ENCODE measurements at regions of chr11 and their contacts with region 1.

Region 1: DNA sequence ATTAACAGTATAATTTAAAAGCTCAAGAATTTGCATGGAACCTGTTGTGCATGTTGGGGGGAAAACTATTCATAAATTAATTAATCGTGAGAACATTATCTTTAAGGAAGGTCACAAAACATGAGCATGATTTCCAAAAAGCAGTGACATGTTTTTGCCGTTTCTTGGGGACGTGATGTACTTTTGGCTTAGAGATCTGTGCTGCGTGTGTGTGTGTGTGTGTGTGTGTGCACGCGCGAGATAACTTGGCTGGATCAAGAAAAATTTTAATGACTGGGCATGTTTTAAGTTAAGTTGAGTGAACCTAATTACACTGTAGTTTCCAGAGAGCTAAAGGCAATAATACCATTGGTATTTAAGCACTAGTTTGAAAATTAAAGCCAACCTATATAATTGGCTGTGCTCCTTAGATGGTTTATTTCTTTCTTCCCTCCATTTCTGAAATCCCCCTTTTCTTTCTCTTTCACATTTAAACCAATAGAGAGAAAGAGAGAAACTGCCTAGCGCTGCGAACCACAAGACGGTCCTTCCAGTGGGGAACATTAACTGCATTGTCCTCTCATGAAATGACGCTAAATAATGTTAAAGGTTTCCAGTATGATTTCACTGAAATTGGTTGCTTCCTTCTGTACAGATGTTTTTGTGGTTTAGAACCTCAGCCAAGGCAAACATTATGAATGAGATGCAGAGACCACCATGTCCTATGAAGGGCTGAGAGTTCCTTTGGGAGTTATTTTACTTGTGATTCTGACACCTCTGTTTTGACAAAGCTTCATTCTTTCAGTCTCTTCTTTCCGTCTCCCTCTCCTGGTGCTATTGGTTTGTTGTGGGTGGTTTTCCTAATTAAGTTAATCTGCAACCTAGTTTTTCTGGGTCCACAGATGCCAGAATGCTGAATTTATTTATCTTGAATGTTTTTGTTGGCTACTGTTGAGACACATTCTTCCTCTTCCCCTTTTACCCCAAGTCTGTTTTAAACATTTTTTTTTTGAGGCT is 51.7 kb downstream of the ZBTB16 start:
- DNase-seq: peak; percentile 71 to 89 (median 82)
- H3K4me3 ChIP-seq: peak overlapping the region in 6 of 7 experiments; percentile 9 to 74 (median 44)
- H3K27ac ChIP-seq: peak overlapping the region; percentile 43 to 72
- H3K4me1 ChIP-seq: peaks cover 25 to 52% (median 43%) of the 10 kb centered on the region in 4 experiments
- H3K27me3 ChIP-seq: no peaks in the 10 kb centered on the region

Region 2: DNA sequence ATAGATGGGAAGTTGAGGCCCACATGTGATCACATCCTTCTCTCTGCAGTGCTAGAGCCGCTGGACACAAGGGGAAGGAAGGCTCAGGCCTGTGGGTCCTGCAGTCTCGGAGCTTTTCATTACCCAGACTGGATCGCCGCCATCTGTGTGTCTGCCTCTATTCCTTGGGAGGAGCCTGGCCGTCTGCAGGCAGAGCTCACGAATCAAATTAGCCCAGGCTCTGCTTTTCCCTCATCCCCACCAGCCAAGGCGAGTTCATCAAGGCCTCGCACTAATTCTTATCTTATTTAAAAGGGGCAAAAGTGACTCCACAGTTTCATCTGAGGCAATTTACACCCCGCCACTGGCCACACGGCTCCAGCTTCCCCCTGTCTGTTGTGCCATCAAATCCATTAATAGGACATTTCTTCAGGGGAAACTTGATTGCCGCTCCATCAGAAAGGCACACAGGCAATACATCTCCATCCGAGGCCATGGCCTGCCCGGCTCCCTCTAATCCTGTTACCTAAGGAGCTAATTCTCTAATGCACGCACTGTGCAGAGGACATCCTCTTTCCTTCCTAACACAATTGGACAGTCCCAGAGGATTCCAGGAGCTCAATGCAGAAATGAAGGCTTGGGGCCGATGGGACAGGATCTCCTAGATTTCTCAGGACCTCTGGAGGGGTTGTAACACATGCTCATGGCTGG is 139.6 kb before region 1 on chr11:
- CTCF ChIA-PET with region 1: no interaction called
- POLR2A ChIA-PET with region 1: no interaction called
- DNase-seq: no peak
- H3K4me3 ChIP-seq: no peak overlapping the region
- H3K27ac ChIP-seq: no peak overlapping the region
- H3K4me1 ChIP-seq: peaks cover 0 to 2% (median 0%) of the 10 kb centered on the region in 4 experiments
- H3K27me3 ChIP-seq: peaks cover 0 to 8% (median 3%) of the 10 kb centered on the region in 5 experiments

Region 3: GRCh38 chr11:114053406-114053805 is 57.8 kb before region 1 on chr11:
- CTCF ChIA-PET with region 1: no interaction called
- POLR2A ChIA-PET with region 1: no interaction called
- DNase-seq: no peak
- H3K4me3 ChIP-seq: no peak overlapping the region
- H3K27ac ChIP-seq: no peak overlapping the region
- H3K4me1 ChIP-seq: peaks cover 0 to 16% (median 11%) of the 10 kb centered on the region in 4 experiments
- H3K27me3 ChIP-seq: peaks cover 0 to 8% (median 2%) of the 10 kb centered on the region in 5 experiments

Region 4: GRCh38 chr11:114091516-114092397 is 19.5 kb before region 1 on chr11:
- CTCF ChIA-PET with region 1: interaction called, 11 read pairs
- POLR2A ChIA-PET with region 1: interaction called, 5 read pairs
- DNase-seq: no peak
- H3K4me3 ChIP-seq: peak overlapping the region in 1 of 7 experiments; percentile 6
- H3K27ac ChIP-seq: peak overlapping the region; percentile 27 to 55
- H3K4me1 ChIP-seq: peaks cover 4 to 71% (median 54%) of the 10 kb centered on the region in 4 experiments
- H3K27me3 ChIP-seq: no peaks in the 10 kb centered on the region

Region 5: DNA sequence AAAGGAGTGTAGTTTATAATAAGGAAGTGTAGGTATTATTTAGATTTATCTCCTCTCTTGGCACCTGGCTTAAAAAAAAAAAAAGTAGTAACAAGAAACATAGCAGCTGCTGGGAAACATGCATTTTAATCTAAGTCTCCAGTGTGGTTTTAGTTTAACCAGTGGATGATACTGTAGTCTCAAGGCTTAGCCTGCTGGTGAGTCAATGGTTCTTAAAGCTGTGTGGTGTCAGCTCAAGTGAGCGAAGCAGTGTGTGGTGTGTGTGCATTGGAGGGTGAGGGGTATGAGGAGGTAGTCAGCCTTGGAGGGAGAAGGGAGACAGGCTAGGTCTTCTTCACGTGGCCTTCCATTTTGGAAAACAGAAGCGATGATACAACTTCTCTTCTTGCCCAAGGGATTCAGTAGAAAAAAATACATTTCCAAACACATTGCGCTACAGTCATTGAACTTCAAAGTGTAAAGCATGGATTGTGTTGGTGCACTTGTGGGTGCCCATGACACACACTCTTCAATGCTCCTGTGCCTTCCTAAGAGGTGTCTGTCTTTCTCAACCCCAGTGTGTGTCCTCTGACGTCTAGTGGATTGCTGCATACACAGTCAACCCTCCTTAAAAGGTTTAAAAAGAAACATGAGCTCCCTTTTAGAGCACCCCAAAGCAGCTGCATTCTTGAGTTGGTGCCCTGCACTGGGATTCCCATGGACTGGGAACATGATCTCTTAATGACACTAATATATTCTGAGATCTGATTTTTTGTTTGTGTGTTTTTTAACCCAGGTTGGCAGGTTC is 11.7 kb before region 1 on chr11:
- CTCF ChIA-PET with region 1: interaction called, 19 read pairs
- POLR2A ChIA-PET with region 1: interaction called, 11 read pairs
- DNase-seq: peak in 2 of 3 donors; percentile 71 to 85
- H3K4me3 ChIP-seq: no peak overlapping the region
- H3K27ac ChIP-seq: no peak overlapping the region
- H3K4me1 ChIP-seq: peaks cover 19 to 65% (median 40%) of the 10 kb centered on the region in 4 experiments
- H3K27me3 ChIP-seq: no peaks in the 10 kb centered on the region

Region 6: GRCh38 chr11:114135737-114136151 is 24.5 kb after region 1 on chr11:
- CTCF ChIA-PET with region 1: interaction called, 12 read pairs
- POLR2A ChIA-PET with region 1: interaction called, 3 read pairs
- DNase-seq: peak; percentile 84 to 95 (median 92)
- H3K4me3 ChIP-seq: peak overlapping the region in 4 of 7 experiments; percentile 9 to 42 (median 27)
- H3K27ac ChIP-seq: peak overlapping the region; percentile 81 to 91
- H3K4me1 ChIP-seq: peaks cover 28 to 86% (median 56%) of the 10 kb centered on the region in 4 experiments
- H3K27me3 ChIP-seq: no peaks in the 10 kb centered on the region

Region 7: DNA sequence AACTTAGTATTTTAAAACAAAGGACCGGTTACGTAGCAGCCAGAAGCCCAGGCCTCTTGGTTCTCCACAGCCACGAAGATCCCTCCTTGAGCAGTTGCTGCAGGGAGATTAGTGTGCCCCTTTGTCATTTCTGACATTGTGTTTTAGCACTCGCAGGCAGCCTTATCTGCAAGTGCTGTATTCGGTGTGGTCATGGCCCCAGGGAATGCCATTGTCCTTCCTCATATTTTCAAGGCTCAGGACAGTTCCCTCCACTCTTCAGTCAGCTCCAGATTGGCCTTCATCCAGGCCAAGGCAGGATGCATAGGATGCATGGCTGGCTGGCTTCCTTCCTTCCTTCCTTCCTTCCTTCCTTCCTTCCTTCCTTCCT is 36.7 kb after region 1 on chr11:
- CTCF ChIA-PET with region 1: interaction called, 11 read pairs
- POLR2A ChIA-PET with region 1: no interaction called
- DNase-seq: peak; percentile 56 to 94 (median 82)
- H3K4me3 ChIP-seq: no peak overlapping the region
- H3K27ac ChIP-seq: peak overlapping the region in 1 of 2 experiments; percentile 2
- H3K4me1 ChIP-seq: peaks cover 0 to 17% (median 8%) of the 10 kb centered on the region in 4 experiments
- H3K27me3 ChIP-seq: no peaks in the 10 kb centered on the region

Region 8: GRCh38 chr11:114228435-114229411 is 117.5 kb after region 1 on chr11:
- CTCF ChIA-PET with region 1: no interaction called
- POLR2A ChIA-PET with region 1: no interaction called
- DNase-seq: no peak
- H3K4me3 ChIP-seq: no peak overlapping the region
- H3K27ac ChIP-seq: no peak overlapping the region
- H3K4me1 ChIP-seq: peaks cover 0 to 11% (median 4%) of the 10 kb centered on the region in 4 experiments
- H3K27me3 ChIP-seq: no peaks in the 10 kb centered on the region

Region 9: GRCh38 chr11:114285599-114285998 is 174.3 kb after region 1 on chr11:
- CTCF ChIA-PET with region 1: no interaction called
- POLR2A ChIA-PET with region 1: no interaction called
- DNase-seq: no peak
- H3K4me3 ChIP-seq: no peak overlapping the region
- H3K27ac ChIP-seq: no peak overlapping the region
- H3K4me1 ChIP-seq: peaks cover 0 to 2% (median 0%) of the 10 kb centered on the region in 4 experiments
- H3K27me3 ChIP-seq: peaks cover 0 to 2% (median 0%) of the 10 kb centered on the region in 5 experiments

Measured in common myeloid progenitor, CD34-positive (primary cell).